CD14-positive monocyte (primary cell): ENCODE measurements at regions of chr7 and their contacts with region 1.

Region 1: DNA sequence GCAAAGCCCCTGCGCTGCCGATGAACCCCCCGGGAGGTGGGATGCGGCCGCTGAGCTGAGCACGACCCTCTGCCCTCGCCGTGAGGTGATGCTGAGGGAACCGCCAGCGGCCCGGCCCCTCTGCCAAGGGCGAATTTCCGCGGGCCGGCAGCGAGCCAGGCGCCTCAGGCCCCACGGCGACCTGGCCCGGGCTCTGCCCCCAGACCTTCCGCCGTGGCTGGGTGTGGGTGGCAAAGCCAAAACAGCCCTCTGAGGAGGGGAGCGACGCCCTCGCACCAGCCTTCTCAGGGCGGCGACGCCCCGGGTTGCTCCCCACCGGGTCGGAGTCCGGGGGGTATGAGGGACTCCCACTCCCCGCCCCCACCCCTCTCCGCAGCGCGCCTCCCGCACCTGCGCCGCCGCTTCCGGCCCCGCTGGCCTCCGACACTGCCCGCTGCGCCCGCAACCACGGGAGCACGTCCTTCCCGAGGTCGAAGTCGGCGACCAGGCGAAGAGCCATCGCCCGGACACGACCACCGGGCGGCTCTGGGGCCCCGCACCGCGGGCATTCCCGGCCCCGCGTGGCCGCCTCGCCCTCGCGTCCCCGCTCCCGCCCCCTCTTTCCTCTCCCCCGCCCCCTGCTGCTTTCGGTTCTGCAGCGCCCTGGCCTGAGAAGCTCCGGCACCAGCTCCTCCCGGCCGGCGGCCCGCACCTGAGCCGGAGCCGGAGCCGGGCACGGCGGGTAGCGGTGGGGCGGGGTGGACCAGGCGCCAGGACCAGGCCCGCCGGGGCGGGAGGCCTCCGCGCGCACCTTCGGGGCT is at the start of gene GSAP:
- DNase-seq: peak in 1 of 3 donors; percentile 72
- H3K4me3 ChIP-seq: peak within 1 kb of the TSS; percentile 60 to 86 (median 75)
- H3K4me3 Mint-ChIP-seq: peak within 1 kb of the TSS; percentile 77 to 89
- H3K27ac ChIP-seq: peak within 1 kb of the TSS; percentile 75 to 99
- H3K27ac Mint-ChIP-seq: peak within 1 kb of the TSS; percentile 87 to 99 (median 93)
- H3K4me1 ChIP-seq: peaks cover 52 to 67% of the 10 kb centered on the region in 2 donors
- H3K4me1 Mint-ChIP-seq: peaks cover 57% of the 10 kb centered on the region
- H3K27me3 ChIP-seq: no peaks in the 10 kb centered on the region
- H3K27me3 Mint-ChIP-seq: no peaks in the 10 kb centered on the region
- CTCF ChIP-seq: no peak
- polyA plus RNA-seq, gene GSAP: 19.1 to 105 (median 35.6) TPM

Region 2: GRCh38 chr7:77383333-77383740 is 32.7 kb before region 1 on chr7:
- intact Hi-C with region 1: loop called in 1 of 2 experiments (anchors 5 kb)
- DNase-seq: no peak
- H3K4me3 ChIP-seq: no peak overlapping the region
- H3K4me3 Mint-ChIP-seq: no peak overlapping the region
- H3K27ac ChIP-seq: no peak overlapping the region
- H3K27ac Mint-ChIP-seq: peak overlapping the region in 2 of 7 donors; percentile 18 to 40
- H3K4me1 ChIP-seq: peaks cover 4 to 10% of the 10 kb centered on the region in 2 donors
- H3K4me1 Mint-ChIP-seq: peaks cover 9% of the 10 kb centered on the region
- H3K27me3 ChIP-seq: no peaks in the 10 kb centered on the region
- H3K27me3 Mint-ChIP-seq: peaks cover 0 to 2% (median 0%) of the 10 kb centered on the region in 3 donors
- CTCF ChIP-seq: no peak

Region 3: DNA sequence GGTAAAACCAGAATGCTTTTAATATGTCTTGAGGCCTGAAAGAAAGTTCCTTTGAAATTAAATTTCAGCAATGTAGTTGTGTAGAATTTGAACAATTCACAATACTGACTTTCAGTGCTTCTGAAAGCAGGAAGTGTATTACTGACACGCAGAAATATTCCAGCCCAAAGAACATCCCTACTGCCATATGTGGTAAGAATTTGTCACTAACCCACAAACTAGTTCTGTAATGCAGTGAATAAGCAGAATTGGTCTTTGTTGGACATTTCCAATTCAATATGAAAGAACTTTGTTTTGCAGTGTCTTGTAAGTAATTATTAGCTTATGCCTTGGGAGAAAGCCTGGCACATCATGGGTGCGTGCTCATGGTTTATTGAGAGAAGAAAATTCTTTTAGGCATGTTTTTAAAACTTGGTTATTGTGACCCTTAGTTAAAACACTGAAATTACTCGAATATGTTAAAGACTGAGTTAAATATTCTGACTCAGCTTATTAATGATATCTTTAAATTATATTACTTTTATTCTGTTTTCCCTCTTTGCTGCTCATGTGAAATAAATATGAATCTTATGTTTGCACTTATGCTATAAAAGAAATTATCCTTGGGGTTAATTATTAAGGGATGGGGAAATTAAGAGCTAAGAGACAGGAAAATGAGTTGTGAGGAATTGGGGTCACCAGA is 154.4 kb after region 1 on chr7:
- intact Hi-C with region 1: loop called in 1 of 2 experiments (anchors 10 kb)
- DNase-seq: peak; percentile 81 to 95 (median 94)
- H3K4me3 ChIP-seq: peak overlapping the region in 1 of 3 experiments; percentile 29
- H3K4me3 Mint-ChIP-seq: no peak overlapping the region
- H3K27ac ChIP-seq: peak overlapping the region; percentile 87 to 92
- H3K27ac Mint-ChIP-seq: peak overlapping the region; percentile 89 to 96 (median 93)
- H3K4me1 ChIP-seq: peaks cover 37 to 58% of the 10 kb centered on the region in 2 donors
- H3K4me1 Mint-ChIP-seq: peaks cover 43% of the 10 kb centered on the region
- H3K27me3 ChIP-seq: no peaks in the 10 kb centered on the region
- H3K27me3 Mint-ChIP-seq: no peaks in the 10 kb centered on the region
- CTCF ChIP-seq: no peak